Natural killer cell (primary cell): ENCODE measurements at regions of chr11 and their contacts with region 1.

Region 1: GRCh38 chr11:128422576-128423370 is 164.6 kb downstream of the ETS1 start:
- DNase-seq: peak; percentile 83 to 93
- ATAC-seq: peak; percentile 90 to 94 (median 92)
- H3K4me3 ChIP-seq: no peak overlapping the region
- H3K4me3 Mint-ChIP-seq: peak overlapping the region; percentile 82
- H3K27ac ChIP-seq: peak overlapping the region; percentile 74
- H3K27ac Mint-ChIP-seq: peak overlapping the region; percentile 93 to 97
- H3K4me1 ChIP-seq: peaks cover 30% of the 10 kb centered on the region
- H3K4me1 Mint-ChIP-seq: peaks cover 42 to 47% of the 10 kb centered on the region in 2 donors
- H3K27me3 ChIP-seq: no peaks in the 10 kb centered on the region
- H3K27me3 Mint-ChIP-seq: no peaks in the 10 kb centered on the region
- CTCF ChIP-seq: no peak

Region 2: GRCh38 chr11:127308291-127308690 is 1114.5 kb before region 1 on chr11:
- intact Hi-C with region 1: no loop called
- DNase-seq: no peak
- ATAC-seq: no peak
- H3K4me3 ChIP-seq: no peak overlapping the region
- H3K4me3 Mint-ChIP-seq: no peak overlapping the region
- H3K27ac ChIP-seq: no peak overlapping the region
- H3K27ac Mint-ChIP-seq: no peak overlapping the region
- H3K4me1 ChIP-seq: no peaks in the 10 kb centered on the region
- H3K4me1 Mint-ChIP-seq: no peaks in the 10 kb centered on the region
- H3K27me3 ChIP-seq: no peaks in the 10 kb centered on the region
- H3K27me3 Mint-ChIP-seq: peaks cover 0 to 2% of the 10 kb centered on the region in 2 donors
- CTCF ChIP-seq: no peak

Region 3: GRCh38 chr11:128290106-128290840 is 132.5 kb before region 1 on chr11:
- intact Hi-C with region 1: loop called (anchors 1 kb)
- DNase-seq: peak; percentile 62 to 95
- ATAC-seq: peak; percentile 79 to 90 (median 85)
- H3K4me3 ChIP-seq: peak overlapping the region; percentile 31
- H3K4me3 Mint-ChIP-seq: peak overlapping the region; percentile 94
- H3K27ac ChIP-seq: peak overlapping the region; percentile 97
- H3K27ac Mint-ChIP-seq: peak overlapping the region; percentile 98 to 99
- H3K4me1 ChIP-seq: peaks cover 37% of the 10 kb centered on the region
- H3K4me1 Mint-ChIP-seq: peaks cover 84 to 90% of the 10 kb centered on the region in 2 donors
- H3K27me3 ChIP-seq: no peaks in the 10 kb centered on the region
- H3K27me3 Mint-ChIP-seq: no peaks in the 10 kb centered on the region
- CTCF ChIP-seq: peak; percentile 87

Region 4: GRCh38 chr11:128302425-128303186 is 120.2 kb before region 1 on chr11:
- intact Hi-C with region 1: loop called (anchors 1 kb)
- DNase-seq: peak; percentile 51 to 95
- ATAC-seq: peak; percentile 81 to 95 (median 88)
- H3K4me3 ChIP-seq: peak overlapping the region; percentile 20
- H3K4me3 Mint-ChIP-seq: peak overlapping the region; percentile 87
- H3K27ac ChIP-seq: peak overlapping the region; percentile 88
- H3K27ac Mint-ChIP-seq: peak overlapping the region; percentile 96 to 99
- H3K4me1 ChIP-seq: peaks cover 52% of the 10 kb centered on the region
- H3K4me1 Mint-ChIP-seq: peaks cover 85 to 89% of the 10 kb centered on the region in 2 donors
- H3K27me3 ChIP-seq: no peaks in the 10 kb centered on the region
- H3K27me3 Mint-ChIP-seq: no peaks in the 10 kb centered on the region
- CTCF ChIP-seq: peak; percentile 23

Region 5: GRCh38 chr11:128342511-128343134 is 80.2 kb before region 1 on chr11:
- intact Hi-C with region 1: loop called (anchors 5 kb)
- DNase-seq: peak in 1 of 2 donors; percentile 74
- ATAC-seq: peak in 2 of 3 donors; percentile 26 to 45
- H3K4me3 ChIP-seq: no peak overlapping the region
- H3K4me3 Mint-ChIP-seq: no peak overlapping the region
- H3K27ac ChIP-seq: peak overlapping the region; percentile 65
- H3K27ac Mint-ChIP-seq: no peak overlapping the region
- H3K4me1 ChIP-seq: peaks cover 26% of the 10 kb centered on the region
- H3K4me1 Mint-ChIP-seq: peaks cover 22 to 26% of the 10 kb centered on the region in 2 donors
- H3K27me3 ChIP-seq: no peaks in the 10 kb centered on the region
- H3K27me3 Mint-ChIP-seq: peaks cover 0 to 2% of the 10 kb centered on the region in 2 donors
- CTCF ChIP-seq: no peak

Region 6: GRCh38 chr11:128365044-128365443 is 57.7 kb before region 1 on chr11:
- intact Hi-C with region 1: no loop called
- DNase-seq: peak in 1 of 2 donors; percentile 66
- ATAC-seq: peak in 1 of 3 donors; percentile 33
- H3K4me3 ChIP-seq: no peak overlapping the region
- H3K4me3 Mint-ChIP-seq: no peak overlapping the region
- H3K27ac ChIP-seq: no peak overlapping the region
- H3K27ac Mint-ChIP-seq: no peak overlapping the region
- H3K4me1 ChIP-seq: peaks cover 6% of the 10 kb centered on the region
- H3K4me1 Mint-ChIP-seq: peaks cover 6 to 7% of the 10 kb centered on the region in 2 donors
- H3K27me3 ChIP-seq: no peaks in the 10 kb centered on the region
- H3K27me3 Mint-ChIP-seq: no peaks in the 10 kb centered on the region
- CTCF ChIP-seq: no peak

Region 7: GRCh38 chr11:128389461-128389976 is 33.3 kb before region 1 on chr11:
- intact Hi-C with region 1: no loop called
- DNase-seq: no peak
- ATAC-seq: no peak
- H3K4me3 ChIP-seq: no peak overlapping the region
- H3K4me3 Mint-ChIP-seq: no peak overlapping the region
- H3K27ac ChIP-seq: no peak overlapping the region
- H3K27ac Mint-ChIP-seq: no peak overlapping the region
- H3K4me1 ChIP-seq: no peaks in the 10 kb centered on the region
- H3K4me1 Mint-ChIP-seq: peaks cover 0 to 11% of the 10 kb centered on the region in 2 donors
- H3K27me3 ChIP-seq: no peaks in the 10 kb centered on the region
- H3K27me3 Mint-ChIP-seq: no peaks in the 10 kb centered on the region
- CTCF ChIP-seq: no peak

Region 8: GRCh38 chr11:128463371-128463829 is 40.6 kb after region 1 on chr11:
- intact Hi-C with region 1: no loop called
- DNase-seq: peak in 1 of 2 donors; percentile 15
- ATAC-seq: no peak
- H3K4me3 ChIP-seq: no peak overlapping the region
- H3K4me3 Mint-ChIP-seq: peak overlapping the region; percentile 47
- H3K27ac ChIP-seq: peak overlapping the region; percentile 67
- H3K27ac Mint-ChIP-seq: peak overlapping the region; percentile 98 to 99
- H3K4me1 ChIP-seq: peaks cover 57% of the 10 kb centered on the region
- H3K4me1 Mint-ChIP-seq: peaks cover 89% of the 10 kb centered on the region in 2 donors
- H3K27me3 ChIP-seq: no peaks in the 10 kb centered on the region
- H3K27me3 Mint-ChIP-seq: no peaks in the 10 kb centered on the region
- CTCF ChIP-seq: no peak

Region 9: GRCh38 chr11:128506999-128507611 is 84.3 kb after region 1 on chr11:
- intact Hi-C with region 1: loop called (anchors 5 kb)
- DNase-seq: peak in 1 of 2 donors; percentile 60
- ATAC-seq: peak; percentile 42 to 57 (median 49)
- H3K4me3 ChIP-seq: peak overlapping the region; percentile 18
- H3K4me3 Mint-ChIP-seq: peak overlapping the region; percentile 98
- H3K27ac ChIP-seq: peak overlapping the region; percentile 67
- H3K27ac Mint-ChIP-seq: peak overlapping the region; percentile 98 to 99
- H3K4me1 ChIP-seq: peaks cover 77% of the 10 kb centered on the region
- H3K4me1 Mint-ChIP-seq: peaks cover 99 to 100% of the 10 kb centered on the region in 2 donors
- H3K27me3 ChIP-seq: no peaks in the 10 kb centered on the region
- H3K27me3 Mint-ChIP-seq: no peaks in the 10 kb centered on the region
- CTCF ChIP-seq: no peak

Region 10: DNA sequence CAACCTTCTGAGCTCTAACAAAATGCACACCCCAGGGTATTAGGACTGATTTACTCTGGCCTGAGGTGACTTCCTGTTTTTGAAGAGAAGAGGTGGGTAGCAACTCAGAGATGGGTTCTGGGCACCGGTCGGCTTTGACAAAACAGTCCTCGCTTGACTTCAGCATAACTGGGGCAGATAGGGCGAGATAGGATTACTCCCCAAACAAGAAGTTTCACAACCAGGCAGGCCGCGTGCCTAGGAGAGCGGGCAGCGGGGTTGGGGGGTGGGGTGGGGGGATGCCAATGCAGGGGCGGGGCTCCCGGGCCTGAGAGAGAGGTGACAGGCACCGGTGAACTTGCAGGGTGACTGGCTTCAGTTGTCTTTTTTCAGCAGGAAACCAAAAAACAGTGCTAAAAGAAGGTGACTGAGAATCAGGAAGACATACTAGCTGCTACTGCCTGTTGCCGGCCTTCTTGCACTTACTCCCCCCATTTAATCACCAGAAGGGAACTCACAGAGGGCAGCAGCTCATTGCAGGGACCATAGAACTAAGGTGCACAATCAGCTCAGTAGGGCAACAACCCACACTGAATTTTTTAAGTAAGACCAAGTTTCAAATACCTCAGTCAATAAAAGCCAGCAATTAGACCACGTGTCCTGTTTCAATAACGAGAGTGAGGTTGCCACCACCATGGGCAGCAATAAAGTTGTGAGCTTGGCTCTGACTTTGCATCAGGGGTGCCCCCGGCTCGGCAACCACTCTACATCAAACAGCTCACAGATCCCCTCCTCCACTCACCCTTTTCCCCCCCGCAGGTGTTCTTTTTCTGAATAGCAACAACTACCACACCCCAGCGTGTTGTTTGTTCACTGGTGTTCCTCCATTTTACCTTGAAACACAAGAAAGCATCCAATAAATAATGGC is 201.7 kb after region 1 on chr11:
- intact Hi-C with region 1: loop called (anchors 1 kb)
- DNase-seq: peak; percentile 57 to 82
- ATAC-seq: peak; percentile 68 to 82 (median 73)
- H3K4me3 ChIP-seq: no peak overlapping the region
- H3K4me3 Mint-ChIP-seq: peak overlapping the region; percentile 78
- H3K27ac ChIP-seq: peak overlapping the region; percentile 83
- H3K27ac Mint-ChIP-seq: peak overlapping the region; percentile 93 to 97
- H3K4me1 ChIP-seq: peaks cover 69% of the 10 kb centered on the region
- H3K4me1 Mint-ChIP-seq: peaks cover 72 to 77% of the 10 kb centered on the region in 2 donors
- H3K27me3 ChIP-seq: no peaks in the 10 kb centered on the region
- H3K27me3 Mint-ChIP-seq: no peaks in the 10 kb centered on the region
- CTCF ChIP-seq: no peak